CD8-positive, alpha-beta T cell (primary cell): ENCODE measurements at regions of chr16 and their contacts with region 1.

Region 1: DNA sequence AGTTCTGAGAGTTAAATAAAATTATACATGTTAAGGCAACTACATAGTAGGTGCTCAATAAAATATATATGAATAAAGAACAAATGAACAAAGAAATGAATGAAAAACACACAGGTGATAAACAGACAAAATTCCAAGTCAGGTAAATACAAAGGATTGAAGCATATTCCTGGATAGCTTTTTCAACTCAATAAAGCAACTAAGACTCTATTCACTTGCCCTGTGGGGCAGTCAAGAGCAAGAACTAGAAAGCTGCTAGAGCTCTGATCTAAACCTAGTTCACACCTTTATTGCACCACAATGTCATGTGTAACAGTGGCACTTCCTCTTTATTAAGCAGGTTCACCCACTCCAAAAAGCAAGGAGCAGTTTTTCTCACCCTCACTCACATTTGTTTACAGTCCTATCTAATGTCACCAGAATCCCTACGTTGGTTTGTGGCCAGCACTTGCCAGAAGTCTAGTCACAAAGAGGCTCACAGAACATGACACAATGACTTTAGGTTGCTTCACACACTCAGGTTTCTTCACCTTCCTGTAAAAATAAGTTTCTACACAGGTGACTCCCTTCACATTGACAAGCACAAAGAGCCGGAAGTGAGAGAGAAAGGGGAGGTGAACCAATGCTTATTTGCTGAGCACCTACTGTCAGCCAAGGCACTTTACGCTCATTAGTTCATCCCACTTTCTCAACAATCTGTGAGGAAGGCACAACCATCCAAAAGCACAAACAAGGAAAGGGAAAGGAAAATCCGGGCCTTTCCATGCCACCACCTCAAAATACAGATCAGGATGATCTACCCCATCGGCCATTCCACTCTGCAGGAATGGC is 70.8 kb downstream of the XPO6 start:
- DNase-seq: peak; percentile 48 to 98 (median 72)
- ATAC-seq: peak; percentile 75
- H3K4me3 ChIP-seq: peak overlapping the region; percentile 37 to 39
- H3K4me3 Mint-ChIP-seq: peak overlapping the region; percentile 81
- H3K27ac ChIP-seq: peak overlapping the region; percentile 88 to 91
- H3K27ac Mint-ChIP-seq: peak overlapping the region; percentile 98
- H3K4me1 ChIP-seq: peaks cover 93% of the 10 kb centered on the region
- H3K4me1 Mint-ChIP-seq: peaks cover 86% of the 10 kb centered on the region
- H3K27me3 ChIP-seq: no peaks in the 10 kb centered on the region
- H3K27me3 Mint-ChIP-seq: no peaks in the 10 kb centered on the region
- CTCF ChIP-seq: no peak

Region 2: GRCh38 chr16:27920391-27920891 is 220.6 kb before region 1 on chr16:
- CTCF ChIA-PET with region 1: no interaction called
- POLR2A ChIA-PET with region 1: no interaction called
- intact Hi-C with region 1: no loop called
- DNase-seq: no peak
- ATAC-seq: no peak
- H3K4me3 ChIP-seq: no peak overlapping the region
- H3K4me3 Mint-ChIP-seq: no peak overlapping the region
- H3K27ac ChIP-seq: no peak overlapping the region
- H3K27ac Mint-ChIP-seq: no peak overlapping the region
- H3K4me1 ChIP-seq: no peaks in the 10 kb centered on the region
- H3K4me1 Mint-ChIP-seq: no peaks in the 10 kb centered on the region
- H3K27me3 ChIP-seq: no peaks in the 10 kb centered on the region
- H3K27me3 Mint-ChIP-seq: peaks cover 45% of the 10 kb centered on the region
- CTCF ChIP-seq: no peak

Region 3: DNA sequence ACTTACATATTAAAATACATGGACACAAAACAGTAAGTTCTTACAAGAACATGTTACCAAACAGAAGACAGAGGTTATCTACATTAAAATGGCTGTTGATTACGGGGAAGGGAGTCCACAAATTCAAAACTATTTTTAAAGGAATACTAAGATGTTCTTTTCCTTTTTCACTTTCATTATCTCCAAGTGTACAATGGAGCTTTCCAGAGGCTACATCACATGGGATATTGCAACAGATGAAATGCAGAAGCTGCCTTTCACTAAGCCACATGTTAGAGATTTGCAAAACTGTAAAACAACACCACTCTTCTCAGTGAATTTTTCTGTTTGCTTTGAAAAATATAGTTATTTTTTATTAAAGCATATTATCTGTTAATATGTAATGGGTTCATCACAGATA is 17.1 kb after region 1 on chr16:
- CTCF ChIA-PET with region 1: interaction called, 4 read pairs
- POLR2A ChIA-PET with region 1: interaction called, 11 read pairs
- intact Hi-C with region 1: no loop called
- DNase-seq: no peak
- ATAC-seq: no peak
- H3K4me3 ChIP-seq: no peak overlapping the region
- H3K4me3 Mint-ChIP-seq: no peak overlapping the region
- H3K27ac ChIP-seq: no peak overlapping the region
- H3K27ac Mint-ChIP-seq: no peak overlapping the region
- H3K4me1 ChIP-seq: peaks cover 32% of the 10 kb centered on the region
- H3K4me1 Mint-ChIP-seq: peaks cover 70% of the 10 kb centered on the region
- H3K27me3 ChIP-seq: no peaks in the 10 kb centered on the region
- H3K27me3 Mint-ChIP-seq: no peaks in the 10 kb centered on the region
- CTCF ChIP-seq: no peak

Region 4: DNA sequence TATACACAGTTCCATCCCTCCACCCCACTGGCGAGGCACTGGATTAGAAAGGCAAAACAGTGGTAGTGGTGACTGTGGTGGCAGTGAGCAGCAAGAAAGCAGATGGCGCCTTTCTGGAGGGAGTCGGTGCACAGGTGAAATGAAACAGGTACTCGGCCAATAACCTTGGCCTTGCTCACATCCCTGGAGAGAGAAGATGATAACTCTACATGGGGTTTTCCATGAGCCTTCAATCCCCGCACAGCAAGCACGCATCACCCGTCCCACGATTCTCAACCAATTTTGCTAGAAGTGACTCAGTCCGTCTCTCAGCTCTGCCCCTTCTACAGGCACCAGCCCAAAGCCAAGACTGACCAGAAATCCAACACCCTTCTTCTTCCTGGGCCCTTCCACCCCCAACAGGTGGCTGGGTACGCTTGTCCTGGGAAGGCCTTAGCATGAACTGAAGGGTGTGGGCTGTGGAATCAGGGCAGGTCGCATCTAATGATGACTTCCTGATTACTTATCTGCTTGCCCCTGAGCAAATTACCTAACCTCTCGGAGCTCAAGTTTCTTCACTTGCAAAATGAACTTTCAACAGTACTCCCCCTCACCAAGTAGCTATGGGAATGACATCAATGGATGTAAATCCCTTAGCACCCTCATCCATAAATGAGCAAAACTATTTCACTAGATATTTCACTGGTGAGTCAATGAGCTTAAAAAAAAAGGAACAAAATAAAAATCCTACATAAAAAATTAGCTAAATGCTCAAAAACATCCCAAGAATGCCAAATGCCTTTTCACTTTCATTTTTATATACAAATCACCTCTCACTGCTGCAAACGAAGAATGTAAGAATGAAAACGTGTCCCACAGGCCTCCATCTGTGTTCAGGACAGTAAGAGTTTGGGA is 52.8 kb after region 1 on chr16:
- CTCF ChIA-PET with region 1: interaction called, 11 read pairs
- POLR2A ChIA-PET with region 1: interaction called, 11 read pairs
- intact Hi-C with region 1: loop called (anchors 1 kb)
- DNase-seq: peak in 5 of 9 experiments; percentile 42 to 75 (median 57)
- ATAC-seq: no peak
- H3K4me3 ChIP-seq: peak overlapping the region; percentile 18 to 40
- H3K4me3 Mint-ChIP-seq: peak overlapping the region; percentile 81
- H3K27ac ChIP-seq: peak overlapping the region; percentile 61 to 86
- H3K27ac Mint-ChIP-seq: peak overlapping the region; percentile 98
- H3K4me1 ChIP-seq: peaks cover 80% of the 10 kb centered on the region
- H3K4me1 Mint-ChIP-seq: peaks cover 80% of the 10 kb centered on the region
- H3K27me3 ChIP-seq: no peaks in the 10 kb centered on the region
- H3K27me3 Mint-ChIP-seq: no peaks in the 10 kb centered on the region
- CTCF ChIP-seq: no peak

Region 5: DNA sequence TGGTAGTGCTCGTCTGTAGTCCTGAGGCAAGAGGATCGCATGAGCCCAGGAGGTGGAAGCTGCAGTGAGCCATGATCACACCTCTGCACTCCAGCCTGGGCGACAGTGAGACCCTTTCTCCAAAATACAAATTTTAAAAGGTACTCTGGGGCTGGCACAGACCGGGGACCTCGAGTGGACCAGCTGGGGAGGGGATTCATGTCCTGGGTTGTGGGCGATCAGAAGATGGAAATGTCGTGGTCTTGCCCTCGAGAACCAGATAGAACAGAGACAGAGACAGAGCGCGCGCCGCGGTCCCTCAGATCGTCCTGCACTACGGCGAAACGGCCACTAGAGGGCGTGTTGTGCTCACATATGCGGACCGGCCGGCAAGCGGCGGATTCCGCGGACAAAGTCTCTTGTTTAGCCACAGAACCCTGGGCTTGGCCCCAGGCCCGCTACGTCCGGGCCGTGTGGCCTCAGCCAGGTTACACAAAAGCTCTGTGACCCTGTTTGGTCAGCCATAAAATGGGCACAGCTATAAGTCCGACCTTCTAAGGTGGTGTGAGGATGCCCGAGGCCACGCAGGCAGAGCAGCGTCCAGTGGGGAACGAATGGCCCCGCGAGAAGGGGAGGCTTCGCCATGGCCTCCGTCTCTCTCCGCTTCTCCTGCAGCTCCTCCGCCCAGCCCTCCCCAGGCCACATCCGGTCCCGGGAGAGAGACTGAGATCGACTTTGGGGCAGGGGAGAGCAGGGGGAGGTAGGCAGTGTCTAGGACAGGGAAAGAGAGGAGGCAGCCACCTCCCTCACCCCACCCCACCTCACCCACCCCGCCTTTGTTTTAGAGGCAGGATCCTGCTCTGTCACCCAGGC is 136.8 kb after region 1 on chr16:
- CTCF ChIA-PET with region 1: interaction called, 7 read pairs
- POLR2A ChIA-PET with region 1: interaction called, 5 read pairs
- intact Hi-C with region 1: loop called in 1 of 2 experiments (anchors 1 kb)
- DNase-seq: peak; percentile 72 to 95 (median 88)
- ATAC-seq: peak; percentile 80
- H3K4me3 ChIP-seq: peak overlapping the region; percentile 60 to 90
- H3K4me3 Mint-ChIP-seq: peak overlapping the region; percentile 81
- H3K27ac ChIP-seq: peak overlapping the region; percentile 57 to 68
- H3K27ac Mint-ChIP-seq: peak overlapping the region; percentile 95
- H3K4me1 ChIP-seq: peaks cover 45% of the 10 kb centered on the region
- H3K4me1 Mint-ChIP-seq: peaks cover 40% of the 10 kb centered on the region
- H3K27me3 ChIP-seq: no peaks in the 10 kb centered on the region
- H3K27me3 Mint-ChIP-seq: no peaks in the 10 kb centered on the region
- CTCF ChIP-seq: peak; percentile 95

Region 6: DNA sequence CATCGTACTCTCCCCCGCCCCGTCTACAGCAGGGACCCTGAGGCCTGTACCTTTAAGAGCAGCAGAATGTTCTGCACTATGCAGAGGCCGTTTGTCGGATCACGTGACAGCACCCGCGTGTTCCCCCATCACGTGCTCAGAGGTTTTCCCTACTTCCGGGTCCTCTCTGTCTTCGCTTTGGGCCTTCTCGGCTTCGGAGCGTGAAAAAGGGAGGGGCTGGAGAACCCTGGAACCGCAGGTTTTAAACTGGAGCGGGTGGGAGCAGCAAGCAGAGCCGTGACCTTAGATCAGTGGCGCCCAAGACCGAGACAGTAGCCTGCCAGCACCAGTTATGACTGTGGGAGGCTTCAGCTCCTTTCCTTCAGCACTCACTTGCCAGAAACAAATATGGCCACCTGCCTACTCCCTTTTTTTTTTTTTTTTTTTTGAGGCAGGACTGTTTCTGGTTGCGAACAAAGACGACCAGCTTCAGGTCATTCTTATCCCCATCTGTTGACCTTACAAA is 351.0 kb after region 1 on chr16 and contains the start of gene CLN3:
- CTCF ChIA-PET with region 1: no interaction called
- POLR2A ChIA-PET with region 1: interaction called, 3 read pairs
- intact Hi-C with region 1: loop called in 1 of 2 experiments (anchors 2 kb)
- DNase-seq: peak; percentile 74 to 95 (median 89)
- ATAC-seq: peak; percentile 48
- H3K4me3 ChIP-seq: peak within 1 kb of the TSS; percentile 95 to 96
- H3K4me3 Mint-ChIP-seq: peak within 1 kb of the TSS; percentile 97
- H3K27ac ChIP-seq: peak within 1 kb of the TSS; percentile 91 to 97
- H3K27ac Mint-ChIP-seq: peak within 1 kb of the TSS; percentile 100
- H3K4me1 ChIP-seq: peaks cover 42% of the 10 kb centered on the region
- H3K4me1 Mint-ChIP-seq: peaks cover 67% of the 10 kb centered on the region
- H3K27me3 ChIP-seq: no peaks in the 10 kb centered on the region
- H3K27me3 Mint-ChIP-seq: no peaks in the 10 kb centered on the region
- CTCF ChIP-seq: no peak
- total RNA-seq, gene CLN3: 37.0 to 43.2 TPM